Activated B cell treated with CpG ODN at 0.5 μM for 24 hours (primary cell): ENCODE measurements at regions of chr5 and their contacts with region 1.

Region 1: GRCh38 chr5:131382407-131383395 is 118.8 kb downstream of the CDC42SE2 start:
- DNase-seq: no peak
- ATAC-seq: peak; percentile 73
- H3K4me3 Mint-ChIP-seq: peak overlapping the region; percentile 46
- H3K27ac Mint-ChIP-seq: peak overlapping the region; percentile 98
- H3K4me1 Mint-ChIP-seq: peaks cover 55% of the 10 kb centered on the region
- H3K27me3 Mint-ChIP-seq: no peaks in the 10 kb centered on the region
- CTCF ChIP-seq: peak; percentile 71

Region 2: DNA sequence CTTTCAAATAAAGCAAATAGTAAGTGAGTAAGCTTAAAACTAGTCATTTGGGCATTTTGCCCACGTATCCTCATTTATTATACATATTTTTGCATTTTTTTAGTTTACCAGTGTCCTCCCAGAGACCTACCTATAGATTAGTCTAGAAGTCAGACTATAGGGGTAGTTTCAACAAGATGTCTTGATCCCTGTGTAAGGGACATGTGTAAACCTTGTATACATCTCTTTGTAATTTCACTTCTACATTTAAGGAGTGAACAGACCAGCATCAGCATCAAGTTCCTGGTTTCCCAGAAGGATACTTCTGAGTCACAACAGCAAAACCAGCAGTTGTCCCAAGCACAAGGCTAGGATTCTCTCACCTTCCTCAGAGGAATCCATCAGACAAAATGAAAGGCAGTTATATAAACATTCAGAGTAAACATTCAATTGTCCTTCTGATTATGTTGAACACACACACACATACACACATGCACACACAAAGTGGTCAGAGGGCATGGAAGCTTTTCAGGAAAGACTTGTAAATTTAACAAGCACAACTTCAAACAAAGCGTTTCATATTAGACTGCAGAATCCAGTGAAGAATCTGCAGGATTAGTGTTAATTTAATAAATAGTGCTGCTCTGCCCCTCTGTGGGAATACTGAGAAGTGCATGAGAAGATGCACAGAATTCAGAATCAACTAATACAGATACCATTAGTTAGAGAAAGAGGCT is 273.0 kb before region 1 on chr5:
- CTCF ChIA-PET with region 1: no interaction called
- POLR2A ChIA-PET with region 1: no interaction called
- intact Hi-C with region 1: loop called (anchors 1 kb)
- DNase-seq: no peak
- ATAC-seq: peak; percentile 64
- H3K4me3 Mint-ChIP-seq: no peak overlapping the region
- H3K27ac Mint-ChIP-seq: no peak overlapping the region
- H3K4me1 Mint-ChIP-seq: no peaks in the 10 kb centered on the region
- H3K27me3 Mint-ChIP-seq: peaks cover 2% of the 10 kb centered on the region
- CTCF ChIP-seq: peak; percentile 43

Region 3: DNA sequence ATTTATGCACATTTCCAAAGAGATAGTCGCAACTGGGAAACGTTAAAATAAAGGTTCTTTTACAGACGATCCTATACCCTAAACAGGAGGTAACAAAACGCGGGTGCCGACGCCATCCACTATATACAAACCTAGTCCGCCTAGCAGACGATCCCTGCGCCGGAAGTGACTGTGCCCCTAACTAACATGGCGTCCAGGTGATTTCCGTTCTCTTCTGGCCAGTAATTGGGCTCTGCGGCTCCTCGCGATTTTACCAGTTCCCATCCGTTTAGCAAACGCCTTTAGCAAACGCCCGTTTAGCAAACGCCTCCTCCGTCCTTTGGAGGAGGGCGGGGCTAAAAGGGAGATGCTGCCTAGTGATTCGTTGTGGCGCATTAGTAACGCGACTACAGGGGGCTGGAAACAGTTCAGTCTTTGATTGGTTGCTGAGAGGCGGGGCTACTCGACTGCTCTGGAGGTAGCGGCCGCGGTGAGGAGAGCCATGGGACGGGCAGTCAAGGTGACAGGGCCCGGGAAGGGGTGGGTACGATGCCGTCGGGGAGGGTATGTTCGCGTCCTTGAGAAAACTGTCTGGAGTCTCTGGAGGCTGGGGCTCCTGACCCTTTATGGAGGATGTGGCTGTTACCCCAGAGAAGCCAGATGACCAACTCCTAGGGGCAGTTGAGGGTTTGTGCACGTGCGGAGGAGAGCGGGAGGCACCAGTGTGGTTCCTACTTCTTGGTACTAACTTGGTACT is 212.0 kb before region 1 on chr5 and contains the start of gene LYRM7:
- CTCF ChIA-PET with region 1: interaction called, 10 read pairs
- POLR2A ChIA-PET with region 1: interaction called, 11 read pairs
- intact Hi-C with region 1: loop called (anchors 1 kb)
- DNase-seq: peak; percentile 80
- ATAC-seq: peak; percentile 96
- H3K4me3 Mint-ChIP-seq: peak within 1 kb of the TSS; percentile 98
- H3K27ac Mint-ChIP-seq: peak within 1 kb of the TSS; percentile 93
- H3K4me1 Mint-ChIP-seq: peaks cover 42% of the 10 kb centered on the region
- H3K27me3 Mint-ChIP-seq: no peaks in the 10 kb centered on the region
- CTCF ChIP-seq: no peak
- total RNA-seq, gene LYRM7: 11.9 and 13.1 TPM in 2 replicates

Region 4: GRCh38 chr5:131258733-131259132 is 124.0 kb before region 1 on chr5:
- CTCF ChIA-PET with region 1: interaction called, 43 read pairs
- POLR2A ChIA-PET with region 1: interaction called, 190 read pairs
- intact Hi-C with region 1: no loop called
- DNase-seq: no peak
- ATAC-seq: no peak
- H3K4me3 Mint-ChIP-seq: peak overlapping the region; percentile 4
- H3K27ac Mint-ChIP-seq: peak overlapping the region; percentile 86
- H3K4me1 Mint-ChIP-seq: peaks cover 57% of the 10 kb centered on the region
- H3K27me3 Mint-ChIP-seq: no peaks in the 10 kb centered on the region
- CTCF ChIP-seq: no peak

Region 5: GRCh38 chr5:131328536-131329285 is 54.0 kb before region 1 on chr5:
- CTCF ChIA-PET with region 1: no interaction called
- POLR2A ChIA-PET with region 1: no interaction called
- intact Hi-C with region 1: loop called (anchors 5 kb)
- DNase-seq: no peak
- ATAC-seq: no peak
- H3K4me3 Mint-ChIP-seq: no peak overlapping the region
- H3K27ac Mint-ChIP-seq: no peak overlapping the region
- H3K4me1 Mint-ChIP-seq: peaks cover 63% of the 10 kb centered on the region
- H3K27me3 Mint-ChIP-seq: no peaks in the 10 kb centered on the region
- CTCF ChIP-seq: no peak

Region 6: DNA sequence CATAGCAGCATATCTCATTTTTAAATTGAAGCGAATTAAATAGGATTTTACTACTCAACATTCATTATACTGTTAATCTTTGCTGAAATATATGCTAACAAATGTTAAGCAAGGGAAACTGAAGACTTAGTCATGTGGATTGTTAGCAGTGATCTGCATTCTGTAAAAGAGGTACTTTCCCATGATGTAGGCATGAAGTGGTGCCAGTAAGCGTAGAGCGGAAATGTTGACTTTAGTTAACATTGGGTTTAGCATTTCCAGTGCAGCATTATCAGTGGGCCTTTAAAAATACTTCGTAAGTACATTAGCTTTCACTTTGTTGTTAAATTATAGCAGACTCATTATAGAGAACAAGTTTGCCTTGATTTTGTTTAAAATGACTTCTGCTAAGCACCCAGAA is 11.4 kb after region 1 on chr5:
- CTCF ChIA-PET with region 1: interaction called, 4 read pairs
- POLR2A ChIA-PET with region 1: interaction called, 8 read pairs
- intact Hi-C with region 1: loop called (anchors 1 kb)
- DNase-seq: no peak
- ATAC-seq: peak; percentile 93
- H3K4me3 Mint-ChIP-seq: peak overlapping the region; percentile 73
- H3K27ac Mint-ChIP-seq: peak overlapping the region; percentile 88
- H3K4me1 Mint-ChIP-seq: peaks cover 71% of the 10 kb centered on the region
- H3K27me3 Mint-ChIP-seq: no peaks in the 10 kb centered on the region
- CTCF ChIP-seq: no peak

Region 7: DNA sequence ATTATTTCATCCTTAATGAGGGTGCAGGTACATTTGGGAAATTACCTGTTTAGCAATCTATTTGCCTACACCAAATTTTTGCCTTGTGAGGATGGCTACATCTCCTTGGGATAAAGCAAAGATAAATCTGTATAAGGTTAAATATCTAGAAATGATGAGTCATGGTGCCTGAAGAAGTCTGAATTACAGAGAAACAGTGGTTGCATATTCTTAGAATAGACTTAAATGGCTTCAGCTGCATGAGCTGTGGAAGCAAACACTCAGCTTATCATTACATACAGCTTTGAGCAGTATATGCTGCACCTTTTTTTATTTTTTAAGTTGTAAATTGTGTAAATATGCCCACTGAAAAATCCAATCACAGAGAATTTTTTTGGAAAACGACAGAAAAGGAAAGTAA is 98.9 kb after region 1 on chr5:
- CTCF ChIA-PET with region 1: no interaction called
- POLR2A ChIA-PET with region 1: no interaction called
- intact Hi-C with region 1: no loop called
- DNase-seq: no peak
- ATAC-seq: no peak
- H3K4me3 Mint-ChIP-seq: no peak overlapping the region
- H3K27ac Mint-ChIP-seq: no peak overlapping the region
- H3K4me1 Mint-ChIP-seq: peaks cover 2% of the 10 kb centered on the region
- H3K27me3 Mint-ChIP-seq: no peaks in the 10 kb centered on the region
- CTCF ChIP-seq: no peak

Region 8: DNA sequence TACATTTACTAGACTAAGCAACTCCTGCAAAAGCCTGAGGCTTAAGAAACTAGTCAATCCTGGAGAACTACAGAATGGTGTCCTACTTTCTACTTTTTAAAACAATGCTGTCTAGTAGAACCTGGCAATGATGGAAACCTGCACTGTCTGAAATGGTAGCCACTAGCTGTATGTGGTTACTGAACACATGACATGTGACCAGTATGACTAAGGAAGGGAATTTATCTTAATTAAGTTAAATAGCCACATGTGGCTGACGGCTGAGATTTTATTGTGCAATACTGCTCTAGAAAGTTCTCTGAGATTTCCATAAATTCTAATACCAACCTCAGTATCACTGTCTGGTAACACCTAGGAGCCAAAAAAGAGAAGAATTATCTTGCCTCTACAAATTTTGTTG is 297.2 kb after region 1 on chr5:
- CTCF ChIA-PET with region 1: no interaction called
- POLR2A ChIA-PET with region 1: no interaction called
- intact Hi-C with region 1: no loop called
- DNase-seq: no peak
- ATAC-seq: no peak
- H3K4me3 Mint-ChIP-seq: no peak overlapping the region
- H3K27ac Mint-ChIP-seq: no peak overlapping the region
- H3K4me1 Mint-ChIP-seq: peaks cover 22% of the 10 kb centered on the region
- H3K27me3 Mint-ChIP-seq: no peaks in the 10 kb centered on the region
- CTCF ChIP-seq: no peak

Region 9: DNA sequence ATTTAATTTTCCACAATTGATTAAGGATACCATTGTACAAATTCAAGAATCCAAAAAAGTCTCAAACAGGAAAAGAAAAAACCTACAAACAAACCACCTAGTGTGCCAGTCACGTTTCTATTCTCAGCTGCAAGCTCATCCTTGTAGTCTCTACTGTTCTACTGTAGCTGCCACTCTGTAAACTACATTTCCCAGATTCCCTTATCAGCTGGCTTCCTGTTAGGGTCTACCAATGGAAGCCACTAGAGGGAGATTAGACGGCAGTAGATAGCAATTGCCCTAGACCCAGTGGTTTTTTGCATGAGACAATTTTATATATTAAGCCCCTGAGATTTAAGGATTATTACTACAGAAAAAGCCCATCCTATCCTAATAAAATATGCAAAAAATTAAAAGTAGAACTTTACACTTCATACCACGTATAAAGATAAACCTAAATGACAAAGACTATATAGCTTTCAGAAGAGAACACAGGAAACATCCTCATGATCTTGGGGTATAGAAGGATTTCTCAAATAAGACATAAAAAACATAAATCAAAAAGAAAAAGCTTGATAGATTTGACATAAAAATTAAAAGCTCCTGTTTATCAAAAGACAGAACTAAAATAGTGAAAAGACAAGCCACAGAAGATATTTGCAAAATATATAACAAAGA is 807.6 kb after region 1 on chr5:
- CTCF ChIA-PET with region 1: no interaction called
- POLR2A ChIA-PET with region 1: no interaction called
- intact Hi-C with region 1: no loop called
- DNase-seq: no peak
- ATAC-seq: peak; percentile 100
- H3K4me3 Mint-ChIP-seq: no peak overlapping the region
- H3K27ac Mint-ChIP-seq: no peak overlapping the region
- H3K4me1 Mint-ChIP-seq: no peaks in the 10 kb centered on the region
- H3K27me3 Mint-ChIP-seq: peaks cover 3% of the 10 kb centered on the region
- CTCF ChIP-seq: no peak